HEK293 (cell line): ENCODE measurements at regions of chr17 and their contacts with region 1.

Region 1: GRCh38 chr17:76182016-76182764 is 41.1 kb upstream of the FOXJ1 start:
- H3K4me3 ChIP-seq: no peak overlapping the region
- H3K27ac ChIP-seq: no peak overlapping the region
- H3K4me1 ChIP-seq: no peaks in the 10 kb centered on the region
- CTCF ChIP-seq: peak; percentile 91

Region 2: DNA sequence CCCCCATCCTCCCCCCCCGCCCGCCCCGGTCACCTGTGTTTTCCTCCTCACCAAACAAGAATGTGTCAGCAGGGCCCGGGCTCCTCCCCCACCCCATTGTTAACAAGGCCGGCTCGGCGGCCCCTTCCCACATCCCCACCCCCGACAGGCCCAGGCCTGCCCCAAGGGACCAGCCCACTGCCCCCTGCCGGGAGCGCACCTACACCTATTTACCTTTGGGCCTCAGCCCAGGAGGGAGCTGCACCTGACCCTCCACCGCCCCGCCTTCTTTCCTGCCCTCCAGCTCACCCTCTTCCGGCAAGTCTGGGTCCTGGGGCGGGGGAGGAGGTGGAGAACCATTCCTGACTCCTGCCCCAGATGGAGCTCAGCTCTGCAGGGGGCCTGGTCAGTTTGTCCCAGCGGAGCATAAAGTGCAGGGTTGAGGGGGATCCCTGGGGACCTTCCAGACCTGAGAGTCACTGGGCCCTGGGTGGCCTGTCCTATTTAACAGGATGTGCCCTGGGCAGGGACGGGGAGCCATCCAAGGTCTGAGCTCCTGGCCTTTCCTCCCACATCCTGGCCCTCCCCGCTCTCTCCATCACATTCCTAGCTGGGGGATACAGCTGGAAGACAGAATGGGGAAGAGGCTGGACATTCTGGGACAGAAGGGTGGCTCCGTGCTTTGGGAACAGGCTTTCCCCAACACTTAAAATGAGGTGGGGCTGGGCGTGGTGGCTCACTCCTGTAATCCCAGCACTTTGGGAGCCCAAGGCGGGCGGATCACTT is 49.4 kb before region 1 on chr17:
- CTCF ChIA-PET with region 1: interaction called, 14 read pairs
- POLR2A ChIA-PET with region 1: no interaction called
- H3K4me3 ChIP-seq: no peak overlapping the region
- H3K27ac ChIP-seq: no peak overlapping the region
- H3K4me1 ChIP-seq: peaks cover 4% of the 10 kb centered on the region
- CTCF ChIP-seq: no peak

Region 3: GRCh38 chr17:76171706-76172105 is 10.5 kb before region 1 on chr17:
- CTCF ChIA-PET with region 1: interaction called, 41 read pairs
- POLR2A ChIA-PET with region 1: no interaction called
- H3K4me3 ChIP-seq: no peak overlapping the region
- H3K27ac ChIP-seq: no peak overlapping the region
- H3K4me1 ChIP-seq: no peaks in the 10 kb centered on the region
- CTCF ChIP-seq: no peak

Region 4: GRCh38 chr17:76208120-76208519 is 25.9 kb after region 1 on chr17:
- CTCF ChIA-PET with region 1: interaction called, 28 read pairs
- POLR2A ChIA-PET with region 1: interaction called, 4 read pairs
- H3K4me3 ChIP-seq: no peak overlapping the region
- H3K27ac ChIP-seq: no peak overlapping the region
- H3K4me1 ChIP-seq: no peaks in the 10 kb centered on the region
- CTCF ChIP-seq: no peak